SK-N-SH (cell line): ENCODE measurements at regions of chr7 and their contacts with region 1.

Region 1: GRCh38 chr7:94436018-94436604 is 41.4 kb downstream of the COL1A2 start:
- DNase-seq: peak; percentile 57
- H3K4me3 ChIP-seq: no peak overlapping the region; a peak in 1 of 4 replicates
- H3K27ac ChIP-seq: peak overlapping the region in 1 of 2 experiments; percentile 63; a peak in 1 of 4 replicates
- H3K4me1 ChIP-seq: peaks cover 19 to 25% of the 10 kb centered on the region in 2 experiments
- H3K27me3 ChIP-seq: no peaks in the 10 kb centered on the region
- CTCF ChIP-seq: peak; percentile 99
- EP300 ChIP-seq: no peak
- RAD21 ChIP-seq: peak; percentile 88

Region 2: DNA sequence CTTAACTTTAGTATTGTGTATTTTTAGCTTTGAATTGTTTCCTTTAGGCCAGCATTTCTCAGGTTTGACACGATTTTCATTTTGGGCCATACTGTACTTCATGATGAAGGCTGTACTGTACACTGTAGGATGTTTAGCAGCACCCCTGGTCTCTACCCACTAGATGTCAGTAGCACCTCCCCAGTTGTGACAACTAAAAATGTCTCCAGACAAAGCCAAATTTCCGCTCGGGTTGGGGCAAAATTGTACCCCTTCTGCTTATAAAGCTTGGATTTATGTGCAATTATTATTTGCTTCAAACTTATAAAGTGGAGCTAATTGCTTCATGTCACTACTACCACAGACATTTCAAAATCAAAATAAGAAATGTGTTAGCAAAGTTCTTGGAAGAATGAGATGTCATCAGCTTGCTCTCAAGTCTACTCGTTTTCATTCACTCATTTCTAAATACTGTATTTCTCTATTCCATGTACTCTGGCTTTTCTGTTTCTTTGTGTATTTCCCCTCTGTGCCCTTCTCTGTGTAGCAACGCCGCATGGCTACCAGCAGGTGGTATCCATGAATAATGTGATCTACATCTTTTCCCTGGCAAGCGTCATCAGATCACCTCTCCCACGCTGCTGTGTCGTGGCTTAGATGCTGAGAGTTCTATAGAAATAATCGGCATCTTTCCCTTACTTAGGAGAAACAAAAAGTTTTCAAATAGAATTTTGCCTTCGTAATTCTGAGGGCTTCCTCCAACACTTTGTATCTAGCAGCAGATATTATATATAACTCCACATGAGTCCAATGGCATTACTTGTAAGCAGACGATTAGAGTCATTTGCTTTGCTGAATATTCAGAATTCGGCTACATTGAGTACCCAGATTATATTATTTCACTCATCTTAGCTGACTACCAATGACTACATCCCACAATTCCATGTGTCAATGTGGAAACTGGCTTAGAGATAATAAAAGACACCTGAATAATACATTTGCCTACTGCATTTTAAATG is 813.8 kb before region 1 on chr7:
- CTCF ChIA-PET with region 1: interaction called, 10 read pairs
- POLR2A ChIA-PET with region 1: no interaction called
- DNase-seq: peak; percentile 32
- H3K4me3 ChIP-seq: no peak overlapping the region; a peak in 1 of 4 replicates
- H3K27ac ChIP-seq: no peak overlapping the region; a peak in 1 of 4 replicates
- H3K4me1 ChIP-seq: peaks cover 0 to 3% of the 10 kb centered on the region in 2 experiments; a peak in 2 of 4 replicates
- H3K27me3 ChIP-seq: no peaks in the 10 kb centered on the region
- CTCF ChIP-seq: peak; percentile 54
- EP300 ChIP-seq: no peak
- RAD21 ChIP-seq: peak; percentile 73

Region 3: GRCh38 chr7:94330269-94331020 is 105.7 kb before region 1 on chr7:
- CTCF ChIA-PET with region 1: no interaction called
- POLR2A ChIA-PET with region 1: no interaction called
- DNase-seq: no peak
- H3K4me3 ChIP-seq: no peak overlapping the region
- H3K27ac ChIP-seq: no peak overlapping the region
- H3K4me1 ChIP-seq: peaks cover 0 to 22% of the 10 kb centered on the region in 2 experiments; a peak in 3 of 4 replicates
- H3K27me3 ChIP-seq: no peaks in the 10 kb centered on the region
- CTCF ChIP-seq: no peak
- EP300 ChIP-seq: no peak
- RAD21 ChIP-seq: no peak

Region 4: DNA sequence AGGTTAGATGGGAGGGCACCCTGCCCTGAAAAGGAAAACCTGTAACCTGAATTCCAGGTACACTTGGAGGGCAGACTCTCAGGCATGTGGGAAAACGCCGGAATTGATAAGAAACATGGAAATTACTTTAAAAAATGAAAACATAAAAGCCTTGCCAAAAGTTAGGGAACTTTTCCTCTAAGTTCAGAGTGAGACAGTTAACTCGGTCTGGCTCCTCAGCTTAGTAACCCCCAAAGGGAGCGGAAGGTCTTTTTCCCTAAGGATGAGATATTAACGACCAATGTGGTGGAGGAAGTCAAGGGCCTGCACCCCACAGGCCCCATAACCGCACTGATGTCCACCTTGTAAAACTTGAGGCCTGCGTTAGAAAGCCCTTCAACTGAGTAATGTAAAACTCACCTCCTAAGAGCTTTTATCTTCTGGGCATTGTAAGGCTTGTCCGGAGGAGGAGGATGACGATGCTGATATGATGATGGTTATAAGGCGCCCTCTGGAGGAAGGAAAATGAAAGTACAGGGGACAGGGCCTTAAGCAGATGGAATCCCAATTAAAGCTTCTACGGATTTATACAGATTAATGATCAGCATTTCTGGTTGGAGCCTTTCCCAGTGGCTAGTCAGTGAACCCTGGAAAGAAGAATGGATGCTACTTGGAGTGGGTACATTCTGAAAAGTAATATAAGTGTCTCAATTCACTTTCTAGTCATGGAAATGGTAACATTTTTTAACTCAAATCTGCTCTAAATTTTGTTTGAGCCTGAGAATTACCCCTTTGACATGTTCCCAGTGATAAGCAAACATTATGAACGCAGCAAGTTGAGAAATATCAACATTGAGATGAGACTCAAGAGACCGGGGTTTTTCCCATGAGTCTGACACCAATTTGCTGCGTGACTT is 40.7 kb before region 1 on chr7:
- CTCF ChIA-PET with region 1: interaction called, 17 read pairs
- POLR2A ChIA-PET with region 1: no interaction called
- DNase-seq: peak; percentile 76
- H3K4me3 ChIP-seq: no peak overlapping the region; a peak in 1 of 4 replicates
- H3K27ac ChIP-seq: peak overlapping the region; percentile 50 to 76; a peak in 3 of 4 replicates
- H3K4me1 ChIP-seq: peaks cover 5 to 36% of the 10 kb centered on the region in 2 experiments
- H3K27me3 ChIP-seq: no peaks in the 10 kb centered on the region
- CTCF ChIP-seq: peak; percentile 98
- EP300 ChIP-seq: no peak
- RAD21 ChIP-seq: peak; percentile 94

Region 5: DNA sequence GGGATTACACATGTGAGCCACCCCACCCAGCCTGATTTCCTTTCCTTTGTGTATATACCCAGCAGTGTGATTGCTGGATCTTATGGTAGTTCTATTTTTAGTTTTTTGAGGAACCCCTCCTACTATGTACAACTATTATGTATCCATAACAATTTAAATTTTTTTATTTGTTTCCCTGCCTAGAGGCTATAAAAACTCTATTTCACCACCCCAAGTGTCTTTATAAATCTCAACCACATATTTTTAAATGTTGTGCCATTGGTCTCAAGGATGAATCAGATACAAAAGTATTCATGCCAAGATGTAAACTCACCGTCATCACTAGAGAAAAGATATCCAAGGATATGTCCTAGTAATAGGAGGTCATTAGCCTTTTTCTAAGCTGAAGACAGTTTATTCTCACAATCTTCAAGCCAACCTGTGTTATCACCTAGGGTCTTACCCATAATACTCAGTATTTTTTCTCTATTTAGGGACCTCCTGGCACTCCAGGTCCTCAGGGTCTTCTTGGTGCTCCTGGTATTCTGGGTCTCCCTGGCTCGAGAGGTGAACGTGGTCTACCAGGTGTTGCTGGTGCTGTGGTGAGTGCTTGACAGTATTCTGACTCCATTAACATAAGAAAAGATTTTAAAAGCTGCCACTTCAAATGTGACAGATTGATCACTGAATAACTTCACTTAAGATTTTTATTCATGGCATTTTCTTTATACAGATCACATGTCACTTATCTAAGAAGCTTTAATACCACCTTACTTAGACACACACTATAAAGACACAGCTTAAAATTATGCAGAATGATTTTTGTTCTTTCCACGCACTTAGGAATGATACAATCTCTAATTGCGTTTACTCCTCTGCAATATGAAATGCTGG is 12.0 kb before region 1 on chr7:
- CTCF ChIA-PET with region 1: interaction called, 48 read pairs
- POLR2A ChIA-PET with region 1: no interaction called
- DNase-seq: no peak
- H3K4me3 ChIP-seq: no peak overlapping the region
- H3K27ac ChIP-seq: peak overlapping the region in 1 of 2 experiments; percentile 69; a peak in 2 of 4 replicates
- H3K4me1 ChIP-seq: peaks cover 2 to 17% of the 10 kb centered on the region in 2 experiments; a peak in 3 of 4 replicates
- H3K27me3 ChIP-seq: no peaks in the 10 kb centered on the region
- CTCF ChIP-seq: no peak
- EP300 ChIP-seq: peak in 1 of 2 experiments; percentile 31; a peak in 1 of 4 replicates
- RAD21 ChIP-seq: no peak

Region 6: GRCh38 chr7:95199779-95200558 is 763.9 kb after region 1 on chr7:
- CTCF ChIA-PET with region 1: interaction called, 16 read pairs
- POLR2A ChIA-PET with region 1: no interaction called
- DNase-seq: peak; percentile 69
- H3K4me3 ChIP-seq: no peak overlapping the region; a peak in 1 of 4 replicates
- H3K27ac ChIP-seq: no peak overlapping the region
- H3K4me1 ChIP-seq: peaks cover 0 to 12% of the 10 kb centered on the region in 2 experiments; a peak in 2 of 4 replicates
- H3K27me3 ChIP-seq: peaks cover 7% of the 10 kb centered on the region; the same call in 1 of the 2 replicates
- CTCF ChIP-seq: peak; percentile 82
- EP300 ChIP-seq: no peak
- RAD21 ChIP-seq: peak; percentile 95